HEK293 (cell line): ENCODE measurements at regions of chr3 and their contacts with region 1.

Region 1: DNA sequence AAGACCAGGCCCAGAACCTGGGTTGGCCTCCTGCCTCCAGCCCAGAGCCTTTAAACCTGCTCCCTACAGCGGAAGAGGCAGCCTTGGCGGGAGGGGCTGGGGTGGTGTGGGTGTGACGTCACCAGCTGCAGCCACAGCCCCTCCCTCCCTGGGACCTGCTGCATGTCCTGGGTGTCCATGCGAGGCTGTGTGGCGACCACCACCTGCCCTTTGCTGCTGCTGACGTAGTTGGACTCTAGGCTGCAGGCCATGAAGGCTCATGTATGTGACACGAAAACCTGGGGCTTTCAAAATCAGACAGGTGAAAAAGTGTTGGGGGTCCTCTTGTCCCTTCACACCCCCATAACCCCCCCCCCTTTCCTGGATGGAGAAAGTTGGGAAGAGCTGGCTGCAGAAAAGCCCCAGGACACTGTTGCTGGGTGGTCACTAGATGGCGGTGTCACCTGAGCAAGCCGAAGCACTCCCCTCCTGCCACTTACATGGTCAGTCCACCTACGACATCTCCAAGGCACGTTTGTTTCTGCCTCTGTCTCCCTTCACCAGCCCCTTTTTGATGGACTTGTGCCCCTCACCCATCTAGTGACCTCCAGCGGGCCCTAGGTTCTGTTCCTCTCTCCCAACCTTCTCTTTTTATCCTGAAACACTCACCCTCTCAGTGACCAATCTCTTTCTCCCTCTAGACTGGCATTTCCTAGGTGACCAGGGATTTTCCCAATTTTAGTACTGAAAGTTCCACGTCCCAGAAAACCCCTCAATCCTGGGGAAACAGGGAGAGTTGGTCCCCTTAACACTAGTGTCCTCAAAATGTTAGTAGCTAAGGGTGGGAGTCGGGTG is 35.2 kb downstream of the SLC6A20 start:
- H3K4me3 ChIP-seq: no peak overlapping the region
- H3K27ac ChIP-seq: no peak overlapping the region
- H3K4me1 ChIP-seq: no peaks in the 10 kb centered on the region
- CTCF ChIP-seq: peak; percentile 43; the same call in 1 of the 2 replicates

Region 2: DNA sequence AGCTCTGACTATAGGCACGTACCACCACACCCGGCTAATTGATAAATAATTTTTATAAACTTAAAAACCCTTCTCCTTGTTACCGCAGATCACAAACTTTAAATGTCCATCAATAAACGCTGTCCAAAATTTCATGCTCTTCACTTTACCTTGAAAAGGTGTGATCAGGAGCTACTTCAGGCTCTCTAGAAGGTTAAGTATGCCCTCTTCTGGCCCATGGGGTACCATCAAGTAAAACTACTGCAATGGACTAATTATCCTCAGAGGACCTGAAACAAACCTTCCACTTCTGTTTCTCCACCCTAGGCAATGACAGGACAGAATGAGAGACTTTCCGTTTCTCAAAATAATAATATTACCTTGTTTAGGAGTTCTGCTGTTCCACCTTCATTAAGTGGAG is 71.6 kb after region 1 on chr3:
- CTCF ChIA-PET with region 1: interaction called, 30 read pairs
- POLR2A ChIA-PET with region 1: no interaction called
- H3K4me3 ChIP-seq: no peak overlapping the region
- H3K27ac ChIP-seq: no peak overlapping the region
- H3K4me1 ChIP-seq: no peaks in the 10 kb centered on the region
- CTCF ChIP-seq: no peak

Region 3: GRCh38 chr3:45896956-45897355 is 135.9 kb after region 1 on chr3:
- CTCF ChIA-PET with region 1: no interaction called
- POLR2A ChIA-PET with region 1: no interaction called
- H3K4me3 ChIP-seq: no peak overlapping the region
- H3K27ac ChIP-seq: no peak overlapping the region
- H3K4me1 ChIP-seq: no peaks in the 10 kb centered on the region
- CTCF ChIP-seq: no peak

Region 4: GRCh38 chr3:45929042-45929679 is 168.1 kb after region 1 on chr3:
- CTCF ChIA-PET with region 1: interaction called, 15 read pairs
- POLR2A ChIA-PET with region 1: no interaction called
- H3K4me3 ChIP-seq: no peak overlapping the region
- H3K27ac ChIP-seq: no peak overlapping the region
- H3K4me1 ChIP-seq: no peaks in the 10 kb centered on the region
- CTCF ChIP-seq: peak; percentile 55